CD4-positive, alpha-beta memory T cell (primary cell): ENCODE measurements at regions of chr11 and their contacts with region 1.

Region 1: DNA sequence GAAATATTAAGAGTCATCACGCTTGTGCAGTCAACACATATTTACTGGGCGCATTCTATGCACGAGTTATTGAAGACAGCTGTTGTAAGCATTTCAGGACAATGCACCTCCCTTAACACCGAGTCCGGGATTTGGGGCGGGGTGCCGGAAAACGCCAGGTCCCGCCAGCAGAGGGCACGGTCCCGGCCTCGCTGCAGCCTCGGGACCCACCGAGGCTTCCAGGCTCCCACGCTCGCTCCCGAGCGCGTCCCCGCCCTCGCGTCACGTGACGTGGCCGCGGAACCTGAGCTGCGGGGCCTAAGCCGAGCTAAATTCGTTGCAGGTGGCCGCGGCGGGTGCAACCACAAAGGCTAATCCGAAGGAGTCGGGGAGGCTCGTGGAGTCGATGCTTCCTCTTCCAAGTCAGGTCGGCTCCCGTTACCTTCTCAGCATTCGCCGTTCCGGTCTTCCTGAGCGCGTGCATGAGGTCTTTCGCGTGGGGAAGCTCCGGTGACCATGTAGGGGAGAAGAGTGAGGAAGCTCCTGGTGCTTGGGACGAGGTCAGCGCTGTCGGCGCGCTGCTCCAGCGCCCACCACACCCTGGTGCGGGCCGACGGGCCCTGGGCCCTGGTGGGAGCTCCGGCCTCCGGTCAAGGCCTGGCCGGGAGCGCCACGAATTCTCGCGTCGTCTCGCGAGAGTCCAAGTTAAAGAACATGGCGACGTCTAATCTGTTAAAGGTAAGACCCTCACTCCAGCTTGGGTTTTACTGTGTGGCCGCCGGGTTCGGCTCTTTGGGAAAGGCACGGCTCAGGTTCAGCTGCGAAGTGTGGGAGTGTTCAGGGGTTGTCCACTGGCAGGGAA is at the start of gene CUL5:
- DNase-seq: peak; percentile 87 to 91 (median 89)
- H3K4me3 ChIP-seq: peak within 1 kb of the TSS; percentile 98 to 100
- H3K4me3 Mint-ChIP-seq: peak within 1 kb of the TSS; percentile 94 to 100 (median 99)
- H3K27ac ChIP-seq: peak within 1 kb of the TSS; percentile 96
- H3K27ac Mint-ChIP-seq: peak within 1 kb of the TSS; percentile 92 to 98 (median 97)
- H3K4me1 ChIP-seq: peaks cover 48% of the 10 kb centered on the region
- H3K4me1 Mint-ChIP-seq: peaks cover 0 to 18% (median 14%) of the 10 kb centered on the region in 4 donors
- H3K27me3 ChIP-seq: no peaks in the 10 kb centered on the region
- H3K27me3 Mint-ChIP-seq: no peaks in the 10 kb centered on the region
- total RNA-seq, gene CUL5: 37.3 to 38.9 TPM

Region 2: GRCh38 chr11:107858217-107859070 is 150.4 kb before region 1 on chr11 and contains the start of gene SLC35F2:
- CTCF ChIA-PET with region 1: no interaction called
- POLR2A ChIA-PET with region 1: no interaction called
- intact Hi-C with region 1: loop called (anchors 1 kb)
- DNase-seq: peak; percentile 56 to 64 (median 61)
- H3K4me3 ChIP-seq: peak within 1 kb of the TSS; percentile 91 to 94
- H3K4me3 Mint-ChIP-seq: peak within 1 kb of the TSS; percentile 94 to 100 (median 97)
- H3K27ac ChIP-seq: peak within 1 kb of the TSS; percentile 45
- H3K27ac Mint-ChIP-seq: peak within 1 kb of the TSS; percentile 85 to 94 (median 91)
- H3K4me1 ChIP-seq: peaks cover 18% of the 10 kb centered on the region
- H3K4me1 Mint-ChIP-seq: peaks cover 18 to 51% (median 23%) of the 10 kb centered on the region in 4 donors
- H3K27me3 ChIP-seq: no peaks in the 10 kb centered on the region
- H3K27me3 Mint-ChIP-seq: no peaks in the 10 kb centered on the region
- total RNA-seq, gene SLC35F2: 6.5 to 7.9 TPM

Region 3: DNA sequence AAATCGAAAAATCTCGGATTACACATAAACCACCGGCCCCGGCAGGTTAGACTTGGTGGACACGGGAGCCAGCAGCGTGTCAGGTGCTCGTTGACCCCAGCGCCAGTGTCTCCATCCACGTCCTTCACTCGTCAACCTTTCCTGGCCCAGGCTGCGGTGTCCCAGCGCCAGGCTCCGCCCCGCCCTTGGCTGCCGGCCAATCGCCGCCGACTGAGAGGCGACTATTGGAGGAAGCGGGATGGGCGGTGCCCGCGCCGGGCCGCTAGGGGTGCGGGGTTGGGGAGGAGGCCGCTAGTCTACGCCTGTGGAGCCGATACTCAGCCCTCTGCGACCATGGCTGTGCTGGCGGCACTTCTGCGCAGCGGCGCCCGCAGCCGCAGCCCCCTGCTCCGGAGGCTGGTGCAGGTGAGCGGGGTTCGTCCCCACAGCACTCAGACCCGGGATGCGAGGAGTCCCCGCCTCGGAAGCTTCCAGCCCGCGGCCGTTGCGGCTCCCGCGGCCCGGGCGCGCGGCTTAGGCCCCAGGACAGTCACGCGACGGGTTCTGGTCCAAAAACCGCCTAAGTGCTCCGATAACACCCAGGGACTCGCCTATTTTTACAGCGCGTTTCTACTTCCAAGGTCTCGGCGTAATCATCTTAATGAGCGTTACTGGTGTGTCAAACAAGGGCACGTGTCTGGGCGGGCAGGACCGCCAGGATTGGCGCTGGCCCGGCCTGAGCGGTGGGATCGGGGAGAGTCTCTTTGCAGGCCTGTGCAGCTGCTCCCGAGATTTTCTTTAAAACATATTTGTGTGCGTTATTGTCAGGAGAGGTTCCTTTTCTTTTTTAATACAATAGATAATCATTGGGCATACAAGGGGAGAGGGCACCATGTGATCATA is 112.6 kb after region 1 on chr11 and contains the start of gene ACAT1:
- CTCF ChIA-PET with region 1: interaction called, 3 read pairs
- POLR2A ChIA-PET with region 1: interaction called, 6 read pairs
- intact Hi-C with region 1: loop called (anchors 2 kb)
- DNase-seq: peak; percentile 93 to 95 (median 93)
- H3K4me3 ChIP-seq: peak within 1 kb of the TSS; percentile 85 to 91
- H3K4me3 Mint-ChIP-seq: peak within 1 kb of the TSS; percentile 82 to 96 (median 93)
- H3K27ac ChIP-seq: peak within 1 kb of the TSS; percentile 71
- H3K27ac Mint-ChIP-seq: peak within 1 kb of the TSS; percentile 61 to 96 (median 89)
- H3K4me1 ChIP-seq: peaks cover 41% of the 10 kb centered on the region
- H3K4me1 Mint-ChIP-seq: peaks cover 36 to 55% (median 38%) of the 10 kb centered on the region in 4 donors
- H3K27me3 ChIP-seq: no peaks in the 10 kb centered on the region
- H3K27me3 Mint-ChIP-seq: no peaks in the 10 kb centered on the region
- total RNA-seq, gene ACAT1: 19.3 to 19.5 TPM

Region 4: DNA sequence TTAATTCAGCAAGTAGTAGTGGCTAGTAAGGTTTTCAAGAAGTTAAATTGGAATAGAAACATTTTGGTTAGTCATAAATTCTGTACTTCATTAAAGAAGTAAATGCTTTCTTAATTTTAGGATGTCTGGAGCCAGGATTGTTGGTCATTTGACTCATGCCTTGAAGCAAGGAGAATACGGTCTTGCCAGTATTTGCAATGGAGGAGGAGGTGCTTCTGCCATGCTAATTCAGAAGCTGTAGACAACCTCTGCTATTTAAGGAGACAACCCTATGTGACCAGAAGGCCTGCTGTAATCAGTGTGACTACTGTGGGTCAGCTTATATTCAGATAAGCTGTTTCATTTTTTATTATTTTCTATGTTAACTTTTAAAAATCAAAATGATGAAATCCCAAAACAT is 138.3 kb after region 1 on chr11:
- CTCF ChIA-PET with region 1: no interaction called
- POLR2A ChIA-PET with region 1: no interaction called
- intact Hi-C with region 1: no loop called
- DNase-seq: no peak
- H3K4me3 ChIP-seq: no peak overlapping the region
- H3K4me3 Mint-ChIP-seq: no peak overlapping the region
- H3K27ac ChIP-seq: no peak overlapping the region
- H3K27ac Mint-ChIP-seq: no peak overlapping the region
- H3K4me1 ChIP-seq: no peaks in the 10 kb centered on the region
- H3K4me1 Mint-ChIP-seq: peaks cover 4 to 11% (median 10%) of the 10 kb centered on the region in 4 donors
- H3K27me3 ChIP-seq: no peaks in the 10 kb centered on the region
- H3K27me3 Mint-ChIP-seq: no peaks in the 10 kb centered on the region

Region 5: GRCh38 chr11:108593214-108593922 is 584.5 kb after region 1 on chr11 and contains the start of gene EXPH5:
- CTCF ChIA-PET with region 1: no interaction called
- POLR2A ChIA-PET with region 1: interaction called, 3 read pairs
- intact Hi-C with region 1: loop called (anchors 2 kb)
- DNase-seq: peak; percentile 82 to 89 (median 86)
- H3K4me3 ChIP-seq: peak within 1 kb of the TSS; percentile 83 to 89
- H3K4me3 Mint-ChIP-seq: peak within 1 kb of the TSS; percentile 95 to 100 (median 97)
- H3K27ac ChIP-seq: peak within 1 kb of the TSS; percentile 45
- H3K27ac Mint-ChIP-seq: peak within 1 kb of the TSS; percentile 78 to 99 (median 95)
- H3K4me1 ChIP-seq: peaks cover 9% of the 10 kb centered on the region
- H3K4me1 Mint-ChIP-seq: peaks cover 17 to 23% (median 18%) of the 10 kb centered on the region in 4 donors
- H3K27me3 ChIP-seq: peaks cover 6% of the 10 kb centered on the region
- H3K27me3 Mint-ChIP-seq: peaks cover 2 to 3% of the 10 kb centered on the region in 2 donors
- total RNA-seq, gene EXPH5: 2.6 to 4.0 TPM

Region 6: GRCh38 chr11:108664730-108665525 is 656.1 kb after region 1 on chr11 and contains the start of gene DDX10:
- CTCF ChIA-PET with region 1: interaction called, 15 read pairs
- POLR2A ChIA-PET with region 1: interaction called, 10 read pairs
- intact Hi-C with region 1: loop called (anchors 2 kb)
- DNase-seq: peak; percentile 97 to 99 (median 98)
- H3K4me3 ChIP-seq: peak within 1 kb of the TSS; percentile 66 to 71
- H3K4me3 Mint-ChIP-seq: peak within 1 kb of the TSS; percentile 98 to 100 (median 100)
- H3K27ac ChIP-seq: peak within 1 kb of the TSS; percentile 64
- H3K27ac Mint-ChIP-seq: peak within 1 kb of the TSS; percentile 94 to 100 (median 99)
- H3K4me1 ChIP-seq: peaks cover 32% of the 10 kb centered on the region
- H3K4me1 Mint-ChIP-seq: peaks cover 32 to 56% (median 45%) of the 10 kb centered on the region in 4 donors
- H3K27me3 ChIP-seq: no peaks in the 10 kb centered on the region
- H3K27me3 Mint-ChIP-seq: no peaks in the 10 kb centered on the region
- total RNA-seq, gene DDX10: 17.4 to 18.2 TPM